RWPE1 (cell line): ENCODE measurements at regions of chr10 and their contacts with region 1.

Region 1: GRCh38 chr10:14536241-14537213 is 205.8 kb upstream of the FRMD4A start:
- DNase-seq: peak; percentile 26
- H3K27ac ChIP-seq: no peak overlapping the region
- CTCF ChIP-seq: peak; percentile 37

Region 2: DNA sequence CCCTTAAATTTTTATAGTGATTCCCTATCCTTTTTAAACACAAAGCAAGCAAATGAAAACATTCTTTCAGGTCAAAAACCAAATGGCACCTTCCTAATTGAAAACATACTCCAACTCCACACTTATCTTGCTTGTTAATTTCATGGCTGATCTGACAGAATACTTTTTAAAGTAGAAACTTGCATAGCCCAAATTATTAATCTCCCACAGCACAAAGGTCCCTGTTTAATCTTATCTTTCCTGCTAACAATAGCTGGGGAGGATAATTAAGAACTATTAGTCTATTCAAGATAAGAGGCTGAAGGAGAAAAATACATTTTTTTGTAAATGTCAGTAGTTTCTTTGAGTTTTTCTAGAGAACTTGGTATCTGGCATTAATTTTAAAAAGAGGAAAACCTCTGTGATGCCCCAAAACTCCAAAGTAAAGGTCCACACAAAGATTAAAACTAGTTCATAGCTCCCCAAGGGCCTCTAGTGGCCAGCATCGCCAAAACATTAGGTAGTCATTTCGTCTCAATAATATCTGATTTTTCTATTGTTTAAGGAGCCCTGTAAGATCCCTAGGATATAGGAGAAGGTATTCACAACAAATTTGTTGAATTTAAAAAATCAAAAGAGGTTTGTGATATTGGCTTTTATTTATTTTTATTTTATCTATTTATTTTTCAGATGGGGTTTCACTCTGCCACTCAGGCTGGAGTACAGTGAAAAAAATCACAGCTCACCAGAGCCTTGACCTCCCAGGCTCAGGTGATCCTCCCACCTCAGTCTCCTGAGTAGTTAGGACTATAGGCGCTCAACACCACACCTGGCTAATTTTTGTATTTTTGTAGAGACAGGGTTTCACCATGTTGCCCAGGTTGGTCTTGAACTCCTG is 286.6 kb after region 1 on chr10:
- CTCF ChIA-PET with region 1: interaction called, 18 read pairs
- POLR2A ChIA-PET with region 1: no interaction called
- DNase-seq: peak; percentile 50
- H3K27ac ChIP-seq: no peak overlapping the region
- CTCF ChIP-seq: peak; percentile 61